Kidney (tissue), 22 donors: ENCODE measurements at regions of chr12 and their contacts with region 1.

Region 1: DNA sequence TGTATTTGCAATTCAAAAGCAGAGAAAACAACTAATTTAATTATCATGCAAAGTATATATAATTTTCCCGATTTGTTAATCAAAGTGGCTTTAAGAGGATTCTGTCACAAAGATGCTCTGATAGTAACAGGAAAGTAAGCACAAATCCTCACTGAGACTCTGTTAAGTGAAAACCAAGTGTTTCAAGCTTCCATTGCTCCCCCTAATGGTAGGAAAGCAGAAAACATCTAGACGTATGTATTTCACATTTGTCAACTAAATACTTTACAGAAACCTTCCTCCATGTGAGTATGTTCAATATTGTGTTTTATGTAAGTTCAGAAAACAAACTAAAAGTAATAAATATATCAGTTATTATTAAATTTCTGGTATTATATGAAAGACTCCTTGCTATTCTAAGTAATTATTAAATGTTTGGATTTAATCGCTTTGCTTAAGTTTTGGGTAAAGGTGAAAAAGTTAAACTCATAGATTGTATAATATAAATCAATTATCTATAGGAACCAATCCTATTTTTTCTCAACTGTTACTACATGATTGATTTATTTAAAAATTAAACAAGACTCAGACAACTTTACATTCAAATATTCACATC is 1.5 kb upstream of the NTS start:
- DNase-seq: peak in 2 of 5 donors; percentile 71 to 80
- H3K4me3 ChIP-seq: no peak overlapping the region
- H3K27ac ChIP-seq: no peak overlapping the region
- H3K4me1 ChIP-seq: no peaks in the 10 kb centered on the region
- H3K27me3 ChIP-seq: no peaks in the 10 kb centered on the region
- CTCF ChIP-seq: peak; percentile 56

Region 2: DNA sequence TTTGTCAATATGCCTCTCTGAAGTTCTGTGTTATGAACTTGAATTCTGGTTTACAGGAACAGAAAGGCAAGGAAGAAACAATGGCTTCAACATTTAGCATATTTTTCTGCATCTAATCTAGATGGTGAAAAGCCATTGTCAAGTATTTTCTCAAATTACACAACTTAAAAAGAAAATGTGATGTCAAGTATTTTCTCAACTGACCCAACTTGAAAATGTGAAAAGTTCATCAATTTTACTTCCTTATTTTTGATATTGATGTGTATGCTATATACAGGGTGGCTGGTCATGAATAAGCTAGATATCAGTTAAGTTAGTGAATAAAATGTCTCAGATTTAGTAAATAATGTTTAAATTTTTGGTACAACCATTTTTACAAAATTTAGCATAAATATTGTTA is 395.8 kb before region 1 on chr12:
- intact Hi-C with region 1: loop called (anchors 10 kb)
- DNase-seq: no peak
- H3K4me3 ChIP-seq: no peak overlapping the region
- H3K27ac ChIP-seq: no peak overlapping the region
- H3K4me1 ChIP-seq: no peaks in the 10 kb centered on the region
- H3K27me3 ChIP-seq: no peaks in the 10 kb centered on the region
- CTCF ChIP-seq: no peak

Region 3: GRCh38 chr12:85979641-85980040 is 107.0 kb after region 1 on chr12:
- intact Hi-C with region 1: no loop called
- DNase-seq: no peak
- H3K4me3 ChIP-seq: no peak overlapping the region
- H3K27ac ChIP-seq: no peak overlapping the region
- H3K4me1 ChIP-seq: no peaks in the 10 kb centered on the region
- H3K27me3 ChIP-seq: no peaks in the 10 kb centered on the region
- CTCF ChIP-seq: no peak

Region 4: DNA sequence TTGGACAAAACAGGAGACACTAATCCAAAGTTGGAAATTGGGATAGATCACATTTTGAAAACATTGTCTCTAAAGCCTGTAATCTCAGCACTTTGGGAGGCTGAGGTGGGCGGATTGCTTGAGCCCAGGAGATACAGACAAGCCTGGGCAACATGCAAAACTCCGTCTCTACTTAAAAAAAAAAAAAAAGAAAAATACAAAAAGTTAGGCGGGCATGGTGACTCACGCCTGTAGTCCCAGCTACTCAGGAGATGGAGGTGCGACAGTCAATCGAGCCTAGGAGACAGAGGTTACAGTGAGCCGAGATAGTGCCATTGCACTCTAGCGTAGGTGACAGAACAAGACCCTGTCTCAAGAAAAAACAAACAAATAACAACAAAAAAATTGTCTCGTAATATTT is 231.5 kb after region 1 on chr12:
- intact Hi-C with region 1: no loop called
- DNase-seq: no peak
- H3K4me3 ChIP-seq: no peak overlapping the region
- H3K27ac ChIP-seq: no peak overlapping the region
- H3K4me1 ChIP-seq: no peaks in the 10 kb centered on the region
- H3K27me3 ChIP-seq: no peaks in the 10 kb centered on the region
- CTCF ChIP-seq: no peak

Region 5: DNA sequence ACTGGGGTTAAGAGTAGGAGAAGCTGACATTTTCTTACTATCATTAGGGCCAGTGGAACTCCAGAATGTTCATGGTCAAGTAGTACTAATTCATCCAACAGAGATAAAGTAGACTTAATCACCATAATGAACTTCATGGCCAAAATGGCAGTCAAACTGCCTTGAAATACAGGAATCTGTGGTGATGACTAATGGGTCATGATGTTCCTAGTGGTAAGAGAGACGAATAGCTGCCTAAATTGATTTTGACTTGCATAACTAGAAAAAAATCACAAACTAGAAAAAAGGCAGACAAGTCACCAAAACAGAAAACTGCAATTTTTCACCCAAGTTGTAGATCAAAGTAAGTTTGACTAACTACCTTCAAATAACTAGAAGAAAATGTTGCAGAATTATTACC is 245.1 kb after region 1 on chr12:
- intact Hi-C with region 1: no loop called
- DNase-seq: no peak
- H3K4me3 ChIP-seq: no peak overlapping the region
- H3K27ac ChIP-seq: no peak overlapping the region
- H3K4me1 ChIP-seq: no peaks in the 10 kb centered on the region
- H3K27me3 ChIP-seq: no peaks in the 10 kb centered on the region
- CTCF ChIP-seq: no peak